ENCODE measurements at regions of chr15 and their contacts with region 1.

Region 1: GRCh38 chr15:85380217-85380811 is at the start of gene AKAP13:
- DNase-seq: peak; percentile 99 to 100
- ATAC-seq: peak; percentile 94 to 96
- H3K4me3 ChIP-seq: peak within 1 kb of the TSS; percentile 91
- H3K27ac ChIP-seq: peak within 1 kb of the TSS; percentile 90 to 92
- H3K4me1 ChIP-seq: peaks cover 29% of the 10 kb centered on the region; the same call in 2 of the 3 replicates
- CTCF ChIP-seq: no peak
- EP300 ChIP-seq: no peak; a peak in 1 of 5 replicates
- POLR2A ChIP-seq: peak; percentile 84
- RAD21 ChIP-seq: no peak; a peak in 1 of 5 replicates
- polyA plus RNA-seq, gene AKAP13: 28.8 and 59.7 TPM in 2 replicates

Region 2: DNA sequence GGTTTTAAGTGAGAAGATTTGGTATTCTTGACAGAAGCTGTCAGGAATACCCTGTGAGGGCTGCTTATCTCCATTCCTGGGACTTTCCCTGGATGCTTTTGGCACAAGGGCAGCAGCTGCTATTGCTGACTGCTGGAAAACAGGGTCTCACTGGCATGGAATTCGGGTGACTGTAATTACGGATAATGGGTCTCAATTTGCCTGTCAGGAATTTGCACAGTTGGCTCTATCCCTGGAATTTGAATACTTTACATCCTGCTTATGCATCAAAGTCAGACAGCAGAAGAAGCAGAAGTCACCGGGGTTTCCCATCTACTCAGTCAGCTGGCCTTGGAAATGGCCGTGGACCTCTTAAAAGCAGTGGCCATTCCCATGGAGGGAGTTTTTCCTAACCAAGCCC is 25.9 kb before region 1 on chr15:
- CTCF ChIA-PET with region 1: interaction called, 4 read pairs
- POLR2A ChIA-PET with region 1: interaction called, 10 read pairs
- DNase-seq: no peak
- ATAC-seq: peak in 1 of 2 experiments; percentile 8; a peak in 3 of 6 replicates
- H3K4me3 ChIP-seq: no peak overlapping the region
- H3K27ac ChIP-seq: peak overlapping the region; percentile 14 to 61; a peak in 4 of 6 replicates
- H3K4me1 ChIP-seq: peaks cover 35% of the 10 kb centered on the region
- CTCF ChIP-seq: no peak
- EP300 ChIP-seq: no peak
- POLR2A ChIP-seq: no peak
- RAD21 ChIP-seq: no peak

Region 3: DNA sequence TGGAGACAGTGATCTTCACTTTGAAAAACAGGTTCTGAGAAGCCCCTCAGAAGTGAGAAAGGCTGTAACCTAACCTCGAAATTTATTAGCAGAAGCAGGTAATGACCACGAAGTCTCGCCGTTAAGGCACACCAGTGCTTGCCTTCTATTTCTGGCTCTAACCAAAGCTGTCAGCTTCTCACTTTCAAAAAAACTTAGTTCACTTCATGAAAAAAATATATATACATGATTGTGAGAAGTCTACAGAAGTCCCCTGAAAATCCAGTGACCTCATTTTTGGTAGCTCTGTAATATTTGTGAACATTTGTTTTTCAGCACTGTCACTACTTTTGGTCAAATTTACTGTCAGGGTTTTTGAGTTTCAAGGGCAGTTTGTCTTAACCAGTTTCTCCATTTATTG is 19.0 kb before region 1 on chr15:
- CTCF ChIA-PET with region 1: interaction called, 8 read pairs
- POLR2A ChIA-PET with region 1: interaction called, 10 read pairs
- DNase-seq: no peak
- ATAC-seq: no peak
- H3K4me3 ChIP-seq: no peak overlapping the region
- H3K27ac ChIP-seq: peak overlapping the region in 1 of 2 experiments; percentile 9; a peak in 2 of 6 replicates
- H3K4me1 ChIP-seq: peaks cover 22% of the 10 kb centered on the region
- CTCF ChIP-seq: no peak
- EP300 ChIP-seq: no peak
- POLR2A ChIP-seq: no peak
- RAD21 ChIP-seq: no peak

Region 4: GRCh38 chr15:85367741-85368140 is 12.6 kb before region 1 on chr15:
- CTCF ChIA-PET with region 1: interaction called, 20 read pairs
- POLR2A ChIA-PET with region 1: interaction called, 10 read pairs
- DNase-seq: no peak
- ATAC-seq: no peak
- H3K4me3 ChIP-seq: no peak overlapping the region
- H3K27ac ChIP-seq: no peak overlapping the region
- H3K4me1 ChIP-seq: no peaks in the 10 kb centered on the region
- CTCF ChIP-seq: no peak
- EP300 ChIP-seq: no peak
- POLR2A ChIP-seq: no peak
- RAD21 ChIP-seq: no peak

Region 5: DNA sequence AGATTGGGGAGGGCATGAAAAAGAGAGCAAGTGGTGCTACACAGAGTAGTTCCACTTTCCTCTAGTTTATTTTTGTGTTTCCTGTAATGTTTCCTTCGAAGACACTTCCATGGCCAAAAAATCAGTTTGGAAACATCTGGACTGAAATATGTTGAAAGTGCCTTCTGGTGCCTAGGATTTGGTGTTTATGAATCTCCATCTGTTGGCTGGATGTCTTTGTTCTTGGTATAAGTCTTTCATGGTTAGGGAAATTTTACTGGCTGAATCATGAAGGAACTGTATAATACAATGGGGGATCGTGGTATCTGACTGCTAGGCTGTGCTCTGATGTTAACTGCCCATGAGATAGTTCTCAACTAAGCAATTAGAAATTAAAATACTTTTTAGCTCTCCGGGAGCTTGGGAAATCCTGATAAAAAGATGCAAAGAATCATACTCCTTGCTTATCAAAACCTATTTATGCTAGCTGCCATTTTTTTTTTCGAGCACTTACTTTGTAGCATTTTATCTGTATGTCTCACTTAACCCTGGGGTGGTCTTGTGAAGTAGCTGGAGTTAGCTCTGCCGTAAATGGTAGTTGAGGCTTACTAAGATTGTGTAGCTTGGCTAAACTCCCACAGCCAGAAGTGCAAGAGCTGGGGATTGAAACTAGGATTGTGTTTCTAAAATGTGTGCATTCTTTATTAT is 22.0 kb after region 1 on chr15:
- CTCF ChIA-PET with region 1: interaction called, 5 read pairs
- POLR2A ChIA-PET with region 1: interaction called, 12 read pairs
- DNase-seq: no peak
- ATAC-seq: no peak
- H3K4me3 ChIP-seq: no peak overlapping the region
- H3K27ac ChIP-seq: 0 out of 6 replicates have a peak overlapping the region, but pooled peaks of 1 of the 2 experiments have one; percentile 1
- H3K4me1 ChIP-seq: peaks cover 59% of the 10 kb centered on the region
- CTCF ChIP-seq: no peak
- EP300 ChIP-seq: no peak
- POLR2A ChIP-seq: no peak
- RAD21 ChIP-seq: no peak

Region 6: DNA sequence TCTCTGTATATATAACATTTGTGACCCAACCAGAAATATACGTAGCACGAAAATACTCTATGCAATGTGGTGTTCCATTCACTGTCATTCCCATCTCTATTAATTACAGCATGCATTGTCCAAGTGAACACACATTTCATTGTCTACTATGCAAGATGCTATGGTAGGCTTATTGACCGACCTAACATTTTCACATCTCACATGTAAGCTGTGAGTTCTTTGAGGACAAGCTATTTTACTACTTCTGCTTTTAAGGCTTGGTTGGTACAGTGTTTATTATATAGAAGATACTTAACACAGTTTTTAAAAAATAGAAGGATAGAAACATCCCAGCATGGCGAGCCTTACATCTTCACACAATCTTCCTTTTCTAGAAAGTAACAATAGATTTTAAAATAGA is 250.0 kb after region 1 on chr15:
- CTCF ChIA-PET with region 1: no interaction called
- POLR2A ChIA-PET with region 1: no interaction called
- DNase-seq: no peak
- ATAC-seq: no peak
- H3K4me3 ChIP-seq: no peak overlapping the region
- H3K27ac ChIP-seq: no peak overlapping the region
- H3K4me1 ChIP-seq: peaks cover 10% of the 10 kb centered on the region; the same call in 2 of the 3 replicates
- CTCF ChIP-seq: no peak
- EP300 ChIP-seq: no peak
- POLR2A ChIP-seq: no peak
- RAD21 ChIP-seq: no peak